ENCODE measurements at regions of chr11 and their contacts with region 1.

Region 1: DNA sequence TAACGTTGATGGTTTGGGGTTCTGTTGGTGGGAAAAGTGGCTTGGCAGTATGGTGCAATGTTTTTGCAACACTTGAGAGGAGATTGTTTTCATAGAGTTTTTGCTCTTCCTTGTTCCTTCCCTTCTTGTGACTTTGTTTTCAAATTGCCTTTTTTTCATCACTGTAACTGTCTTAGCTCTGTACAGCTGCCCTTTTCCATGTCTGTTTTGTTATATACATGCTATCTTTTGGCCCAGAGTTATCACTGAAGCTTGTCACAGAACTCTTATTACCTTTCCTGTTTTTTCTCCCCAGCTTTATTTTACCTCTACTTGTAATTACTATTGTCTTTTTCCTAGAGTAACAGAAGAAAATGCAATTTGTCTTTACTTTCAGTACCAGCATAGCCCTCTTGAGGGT is 154.1 kb downstream of the DDX10 start:
- DNase-seq: no peak
- ATAC-seq: no peak
- H3K4me3 ChIP-seq: no peak overlapping the region
- H3K27ac ChIP-seq: no peak overlapping the region
- H3K4me1 ChIP-seq: no peaks in the 10 kb centered on the region
- H3K27me3 ChIP-seq: no peaks in the 10 kb centered on the region
- CTCF ChIP-seq: no peak
- POLR2A ChIP-seq: no peak

Region 2: DNA sequence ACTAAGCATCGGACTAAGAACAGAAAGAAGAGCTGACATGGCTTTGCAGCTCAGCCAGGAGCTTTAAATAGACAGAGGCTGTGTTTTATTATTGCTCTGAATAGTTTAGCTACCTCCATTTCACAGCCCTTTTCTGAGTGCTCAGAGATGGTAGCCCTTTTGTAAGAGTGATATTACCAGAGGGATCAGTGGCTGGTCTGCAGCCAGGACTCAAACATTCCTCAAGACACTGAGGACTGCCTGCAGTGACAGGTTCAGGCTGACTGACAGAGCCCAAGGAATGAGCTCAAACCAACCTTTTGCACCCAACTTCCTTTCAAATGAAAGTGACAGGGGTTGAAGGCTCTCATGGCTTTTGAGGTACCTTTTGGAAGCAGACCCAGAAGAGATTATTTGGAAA is 34.9 kb after region 1 on chr11:
- in situ Hi-C with region 1: no loop called
- intact Hi-C with region 1: loop called (anchors 1 kb)
- DNase-seq: peak in 1 of 2 donors; percentile 55
- ATAC-seq: peak; percentile 74 to 91
- H3K4me3 ChIP-seq: peak overlapping the region; percentile 17 to 20 (median 18)
- H3K27ac ChIP-seq: peak overlapping the region; percentile 46 to 69 (median 62)
- H3K4me1 ChIP-seq: peaks cover 32% of the 10 kb centered on the region in 2 donors
- H3K27me3 ChIP-seq: no peaks in the 10 kb centered on the region
- CTCF ChIP-seq: no peak
- POLR2A ChIP-seq: no peak